Upper lobe of right lung (tissue), 1 donor: ENCODE measurements at regions of chr20 and their contacts with region 1.

Region 1: GRCh38 chr20:63377256-63377941 is 16.2 kb upstream of the CHRNA4 start:
- DNase-seq: no peak
- ATAC-seq: no peak
- H3K4me3 ChIP-seq: no peak overlapping the region
- H3K27ac ChIP-seq: no peak overlapping the region
- H3K4me1 ChIP-seq: no peaks in the 10 kb centered on the region
- H3K27me3 ChIP-seq: peaks cover 66% of the 10 kb centered on the region
- CTCF ChIP-seq: no peak

Region 2: DNA sequence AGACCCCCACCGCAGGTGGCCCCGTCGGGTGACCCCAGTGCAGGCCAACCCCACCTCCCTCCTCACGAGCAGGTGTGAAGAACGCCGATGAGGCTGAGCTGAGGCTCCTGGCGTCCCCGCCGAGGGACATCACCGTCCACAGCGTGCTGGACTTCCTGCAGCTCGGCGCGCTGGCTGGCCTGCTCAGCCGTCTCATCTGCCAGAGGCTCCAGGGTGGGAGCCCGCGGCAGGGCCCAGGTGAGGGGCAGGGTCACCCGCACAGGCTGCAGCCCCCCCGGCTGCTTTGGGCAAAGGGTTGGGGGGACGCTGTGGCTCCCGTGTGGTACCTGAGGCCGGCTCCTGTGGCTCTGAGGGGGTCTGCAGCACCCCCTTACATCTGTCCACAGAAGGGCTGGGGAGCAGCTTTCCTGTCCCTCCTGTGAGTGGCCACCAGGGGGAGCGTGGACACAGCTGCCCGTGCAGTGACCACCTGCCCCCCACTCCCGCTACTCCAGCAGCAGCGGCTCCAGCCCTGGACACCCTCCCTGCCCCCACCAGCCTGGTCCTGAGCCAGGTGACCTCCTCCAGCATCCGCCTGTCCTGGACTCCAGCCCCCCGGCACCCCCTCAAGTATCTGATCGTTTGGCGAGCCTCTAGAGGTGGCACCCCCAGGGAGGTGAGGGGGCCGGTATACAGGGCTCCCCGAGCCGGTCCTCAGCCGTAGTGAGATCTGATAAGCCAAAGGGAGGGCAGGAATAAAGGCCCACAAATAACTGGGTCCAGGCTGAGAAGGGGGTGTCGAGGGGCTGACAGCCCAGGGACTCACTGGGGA is 67.9 kb before region 1 on chr20:
- intact Hi-C with region 1: loop called (anchors 5 kb)
- DNase-seq: no peak
- ATAC-seq: peak; percentile 43
- H3K4me3 ChIP-seq: no peak overlapping the region
- H3K27ac ChIP-seq: no peak overlapping the region
- H3K4me1 ChIP-seq: no peaks in the 10 kb centered on the region
- H3K27me3 ChIP-seq: peaks cover 43% of the 10 kb centered on the region
- CTCF ChIP-seq: peak; percentile 82